ENCODE measurements at regions of chr4 and their contacts with region 1.

Region 1: GRCh38 chr4:76198411-76199237 is 15.0 kb downstream of the SCARB2 start:
- DNase-seq: peak; percentile 63 to 85 (median 79)
- H3K4me3 ChIP-seq: peak overlapping the region in 1 of 4 donors; percentile 14
- H3K27ac ChIP-seq: peak overlapping the region; percentile 51 to 78 (median 68)
- H3K4me1 ChIP-seq: peaks cover 33 to 85% of the 10 kb centered on the region in 2 donors
- H3K27me3 ChIP-seq: no peaks in the 10 kb centered on the region
- CTCF ChIP-seq: no peak
- POLR2A ChIP-seq: no peak

Region 2: DNA sequence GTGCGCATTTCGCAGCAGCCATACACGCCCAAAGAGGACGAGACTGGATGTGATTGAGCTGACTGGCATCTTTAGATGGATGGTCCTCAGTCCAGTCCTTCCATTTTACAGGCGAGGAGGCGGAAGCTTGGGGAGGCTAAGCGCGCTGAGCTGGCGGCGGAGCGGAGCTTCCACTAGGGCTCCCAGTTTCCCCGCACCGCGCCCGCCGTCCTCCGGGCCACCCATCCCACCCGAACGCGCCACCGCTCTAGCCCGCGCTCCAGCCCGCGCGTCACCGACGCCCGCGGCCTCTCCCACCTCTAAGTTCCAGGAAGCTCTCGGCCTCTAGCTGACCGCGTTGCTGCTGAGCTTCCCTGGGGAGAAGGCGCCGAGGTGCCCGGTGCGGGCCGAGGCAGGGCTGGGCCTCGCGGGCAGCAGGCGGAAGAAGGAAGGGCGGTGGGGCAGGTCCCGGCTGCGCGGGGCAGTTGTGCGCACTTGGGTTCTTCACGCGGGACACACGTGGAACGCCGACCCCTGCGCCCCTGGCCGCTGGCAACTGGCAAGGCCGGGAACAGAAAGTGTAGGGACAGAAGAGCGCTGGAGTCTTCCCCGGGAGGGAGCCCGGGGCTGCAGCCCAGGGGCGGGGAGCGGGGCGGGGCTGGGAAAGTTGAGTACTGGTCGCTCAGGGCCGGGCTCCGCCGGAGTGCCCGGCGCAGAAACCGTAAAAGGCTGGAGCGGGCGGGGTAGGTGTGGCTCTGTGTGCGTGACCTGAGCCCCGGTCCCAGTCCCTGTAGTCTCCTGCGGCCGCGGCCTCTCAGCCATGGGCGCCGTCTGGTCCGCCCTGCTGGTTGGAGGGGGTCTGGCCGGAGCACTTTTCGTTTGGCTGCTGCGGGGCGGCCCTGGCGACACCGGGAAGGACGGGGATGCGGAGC is 107.6 kb after region 1 on chr4 and contains the start of gene STBD1:
- intact Hi-C with region 1: loop called in 1 of 2 experiments (anchors 10 kb)
- DNase-seq: peak; percentile 76 to 90 (median 78)
- H3K4me3 ChIP-seq: peak within 1 kb of the TSS; percentile 62 to 87 (median 74)
- H3K27ac ChIP-seq: peak within 1 kb of the TSS; percentile 57 to 90 (median 84)
- H3K4me1 ChIP-seq: peaks cover 4 to 28% of the 10 kb centered on the region in 2 donors
- H3K27me3 ChIP-seq: no peaks in the 10 kb centered on the region
- CTCF ChIP-seq: peak in 3 of 6 experiments; percentile 5 to 18 (median 5)
- POLR2A ChIP-seq: peak in 1 of 2 donors; percentile 63
- total RNA-seq, gene STBD1: 1.5 to 6.3 (median 3.6) TPM